BJ (cell line): ENCODE measurements at regions of chr19 and their contacts with region 1.

Region 1: DNA sequence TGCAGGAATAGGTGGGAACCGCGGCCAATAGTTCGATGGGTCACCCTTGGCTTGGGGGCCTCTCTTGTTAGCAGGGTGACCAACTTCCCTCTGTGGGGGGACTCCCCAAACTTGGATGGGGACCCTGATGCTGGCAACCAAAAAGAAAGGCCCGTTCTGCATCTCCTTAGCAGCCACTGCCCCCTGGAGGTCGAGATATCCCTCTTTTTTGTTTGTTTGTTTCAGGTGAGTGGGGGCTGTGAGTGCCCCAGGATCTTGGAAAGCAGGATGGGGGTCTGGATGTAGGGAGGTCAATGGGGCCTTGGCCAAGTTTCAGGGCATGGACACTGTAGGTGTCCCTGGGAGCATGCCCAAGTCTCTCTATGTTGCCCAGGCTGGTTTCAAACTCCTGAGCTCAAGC is 7.7 kb upstream of the CRTC1 start:
- DNase-seq: no peak
- H3K4me3 ChIP-seq: no peak overlapping the region
- H3K27me3 ChIP-seq: no peaks in the 10 kb centered on the region
- CTCF ChIP-seq: peak; percentile 51

Region 2: GRCh38 chr19:18562086-18562485 is 113.7 kb before region 1 on chr19:
- CTCF ChIA-PET with region 1: no interaction called
- POLR2A ChIA-PET with region 1: no interaction called
- DNase-seq: no peak
- H3K4me3 ChIP-seq: no peak overlapping the region
- H3K27me3 ChIP-seq: no peaks in the 10 kb centered on the region
- CTCF ChIP-seq: no peak

Region 3: DNA sequence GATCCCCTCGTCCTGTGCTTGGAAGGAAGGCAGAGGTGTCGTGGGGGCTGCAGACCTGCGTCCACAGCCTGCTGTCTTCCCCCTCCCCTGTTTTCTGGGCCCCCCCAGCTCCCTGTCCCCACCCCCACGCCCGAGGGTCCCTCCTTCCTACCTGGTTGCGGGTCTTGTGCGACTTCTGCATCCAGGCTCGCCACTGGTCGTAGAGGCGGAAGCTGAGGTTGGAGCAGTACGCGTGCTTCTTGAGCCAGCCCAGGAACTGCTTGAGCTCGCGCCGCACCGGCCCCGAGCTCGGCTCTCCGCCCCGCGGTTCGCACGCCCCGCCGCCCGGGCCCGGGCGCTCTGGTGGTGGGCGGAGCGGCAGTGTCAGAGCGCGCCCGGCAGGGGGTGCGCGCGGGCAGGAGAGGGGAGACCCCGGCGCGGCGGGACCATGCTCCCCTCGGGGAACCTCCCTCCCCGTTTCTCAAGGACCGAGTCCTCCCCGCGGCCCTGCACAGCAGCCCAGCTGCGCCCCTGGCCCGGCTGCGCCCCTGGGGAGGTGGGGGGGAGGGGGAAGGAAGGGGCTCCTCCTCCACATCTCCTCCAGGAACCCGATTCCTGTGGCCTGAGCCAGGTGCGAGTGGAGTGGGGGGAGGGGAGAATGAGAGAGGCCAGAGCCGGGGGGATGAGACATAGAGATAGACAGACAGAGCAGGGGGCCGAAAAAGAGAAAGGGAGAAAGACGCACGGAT is 81.5 kb before region 1 on chr19:
- CTCF ChIA-PET with region 1: interaction called, 17 read pairs
- POLR2A ChIA-PET with region 1: no interaction called
- DNase-seq: no peak
- H3K4me3 ChIP-seq: peak overlapping the region; percentile 35
- H3K27me3 ChIP-seq: no peaks in the 10 kb centered on the region
- CTCF ChIP-seq: peak; percentile 50